ENCODE measurements at regions of chr4 and their contacts with region 1.

Region 1: GRCh38 chr4:89226665-89227574 is 80.7 kb downstream of the GPRIN3 start:
- DNase-seq: peak; percentile 62
- ATAC-seq: peak; percentile 100
- H3K4me3 ChIP-seq: no peak overlapping the region
- H3K27ac ChIP-seq: no peak overlapping the region
- H3K4me1 ChIP-seq: peaks cover 15% of the 10 kb centered on the region; the same call in 1 of the 2 replicates
- H3K27me3 ChIP-seq: no peaks in the 10 kb centered on the region
- CTCF ChIP-seq: peak; percentile 86
- EP300 ChIP-seq: no peak
- POLR2A ChIP-seq: no peak
- RAD21 ChIP-seq: peak; percentile 65

Region 2: DNA sequence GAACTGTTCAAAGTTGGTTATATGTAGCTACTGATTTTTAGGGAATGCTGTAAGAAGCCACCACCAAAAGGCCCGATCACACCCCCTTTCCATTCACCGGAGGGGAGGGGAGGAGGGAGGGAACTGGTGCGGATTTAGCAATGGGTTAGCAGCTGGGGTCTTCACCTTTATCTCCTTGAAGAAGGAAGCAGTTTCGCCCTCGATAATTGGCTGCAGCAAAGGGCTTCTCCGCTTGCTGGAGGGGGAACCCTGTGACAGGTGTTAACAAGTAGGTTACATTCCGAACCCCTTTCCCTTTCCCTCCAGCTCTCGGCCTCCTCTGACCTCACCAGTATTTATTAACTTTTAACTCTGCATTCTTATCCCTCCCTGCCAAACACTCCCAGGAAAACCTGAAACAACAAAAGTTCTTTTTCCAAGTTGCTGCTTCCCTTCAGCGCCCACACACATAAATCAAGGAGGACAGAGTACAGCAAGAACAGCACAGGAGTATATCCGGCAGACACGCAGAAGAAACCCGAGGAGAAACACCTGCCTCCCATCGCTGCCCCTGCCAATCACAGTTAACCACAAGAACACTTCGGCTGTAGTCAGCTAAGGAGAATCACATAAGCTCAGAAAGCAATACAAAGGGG is 489.5 kb before region 1 on chr4:
- CTCF ChIA-PET with region 1: no interaction called
- POLR2A ChIA-PET with region 1: no interaction called
- in situ Hi-C with region 1: no loop called
- intact Hi-C with region 1: no loop called
- DNase-seq: no peak
- ATAC-seq: no peak
- H3K4me3 ChIP-seq: no peak overlapping the region
- H3K27ac ChIP-seq: no peak overlapping the region
- H3K4me1 ChIP-seq: no peaks in the 10 kb centered on the region
- H3K27me3 ChIP-seq: no peaks in the 10 kb centered on the region
- CTCF ChIP-seq: no peak
- EP300 ChIP-seq: no peak
- POLR2A ChIP-seq: no peak
- RAD21 ChIP-seq: no peak

Region 3: DNA sequence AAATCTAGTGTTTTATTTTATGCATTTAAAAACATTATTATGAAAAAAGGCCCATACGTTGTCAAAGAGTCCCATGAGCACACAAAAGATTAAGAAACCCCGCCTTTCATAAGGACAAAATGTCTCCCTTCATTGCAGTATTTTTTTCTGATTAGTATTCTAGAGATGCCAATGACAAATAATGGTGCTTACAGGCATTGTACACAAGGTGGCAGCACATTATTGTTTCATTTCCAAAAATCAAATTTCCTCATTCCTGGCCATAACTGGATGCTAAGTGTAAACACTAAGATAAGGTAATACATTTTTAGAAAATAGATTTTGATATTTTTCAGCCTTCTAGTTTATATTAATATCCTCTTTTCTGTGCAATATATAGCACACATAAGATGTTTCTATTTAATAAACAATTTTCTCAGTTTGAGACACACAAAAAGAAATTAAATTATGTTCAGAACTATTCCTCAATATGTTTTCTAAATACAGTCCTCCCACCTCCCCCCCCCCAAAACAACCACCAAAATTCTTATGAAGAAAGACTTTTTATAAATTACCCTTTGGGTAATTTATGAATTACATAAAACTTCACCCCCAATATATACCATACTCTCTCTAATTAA is 67.9 kb before region 1 on chr4:
- CTCF ChIA-PET with region 1: no interaction called
- POLR2A ChIA-PET with region 1: no interaction called
- in situ Hi-C with region 1: no loop called
- intact Hi-C with region 1: loop called (anchors 2 kb)
- DNase-seq: peak; percentile 6
- ATAC-seq: peak; percentile 22; the same call in 1 of the 3 replicates
- H3K4me3 ChIP-seq: no peak overlapping the region
- H3K27ac ChIP-seq: no peak overlapping the region
- H3K4me1 ChIP-seq: no peaks in the 10 kb centered on the region
- H3K27me3 ChIP-seq: no peaks in the 10 kb centered on the region
- CTCF ChIP-seq: peak; percentile 66
- EP300 ChIP-seq: no peak
- POLR2A ChIP-seq: no peak
- RAD21 ChIP-seq: no peak

Region 4: DNA sequence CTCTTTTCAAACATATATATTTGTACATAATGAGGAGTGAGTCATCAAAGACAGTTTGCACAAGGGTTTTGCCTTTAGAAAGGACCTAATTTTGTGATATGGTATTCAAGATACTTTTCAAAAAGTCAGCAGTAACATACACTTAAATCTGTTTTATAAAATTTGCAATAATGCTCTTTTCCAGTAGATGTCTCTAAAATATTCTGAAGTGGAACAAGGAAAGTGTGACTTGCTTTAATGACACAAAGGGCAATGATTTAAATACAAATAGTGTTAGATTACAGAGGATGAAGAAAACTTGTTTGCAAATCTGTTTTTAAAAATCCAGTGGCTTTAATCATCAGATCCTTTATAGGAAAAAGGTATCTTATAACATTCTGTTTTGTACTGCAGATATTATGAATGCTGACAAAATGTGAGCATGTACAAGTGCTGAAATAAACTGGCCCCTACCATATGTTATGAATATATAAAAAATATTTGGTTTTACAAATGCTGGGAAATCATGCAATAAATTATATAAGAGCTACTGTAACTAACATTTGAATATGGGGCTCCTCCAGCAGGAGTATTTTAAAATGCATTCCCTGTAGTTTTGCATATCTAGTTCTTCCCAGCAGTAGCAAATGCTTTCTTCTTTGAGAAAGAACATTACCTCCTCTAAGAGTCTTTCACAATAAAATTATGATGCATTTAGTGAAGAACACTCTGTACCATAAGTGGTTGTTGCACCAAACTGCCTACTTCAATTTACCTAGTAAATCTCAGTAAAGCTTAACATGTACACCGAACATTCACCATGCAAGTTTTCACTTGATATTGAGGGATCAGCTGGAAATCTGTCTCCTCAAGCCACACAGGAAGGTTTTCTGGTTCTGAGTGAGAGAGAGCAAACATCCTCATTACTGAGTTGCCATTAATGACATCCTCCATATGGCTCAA is 688.0 kb after region 1 on chr4:
- CTCF ChIA-PET with region 1: no interaction called
- POLR2A ChIA-PET with region 1: no interaction called
- in situ Hi-C with region 1: loop called (anchors 25 kb)
- intact Hi-C with region 1: no loop called
- DNase-seq: no peak
- ATAC-seq: no peak
- H3K4me3 ChIP-seq: no peak overlapping the region
- H3K27ac ChIP-seq: no peak overlapping the region
- H3K4me1 ChIP-seq: no peaks in the 10 kb centered on the region
- H3K27me3 ChIP-seq: no peaks in the 10 kb centered on the region
- CTCF ChIP-seq: no peak
- EP300 ChIP-seq: no peak
- POLR2A ChIP-seq: no peak
- RAD21 ChIP-seq: no peak